CD4-positive, alpha-beta T cell (primary cell): ENCODE measurements at regions of chr19 and their contacts with region 1.

Region 1: DNA sequence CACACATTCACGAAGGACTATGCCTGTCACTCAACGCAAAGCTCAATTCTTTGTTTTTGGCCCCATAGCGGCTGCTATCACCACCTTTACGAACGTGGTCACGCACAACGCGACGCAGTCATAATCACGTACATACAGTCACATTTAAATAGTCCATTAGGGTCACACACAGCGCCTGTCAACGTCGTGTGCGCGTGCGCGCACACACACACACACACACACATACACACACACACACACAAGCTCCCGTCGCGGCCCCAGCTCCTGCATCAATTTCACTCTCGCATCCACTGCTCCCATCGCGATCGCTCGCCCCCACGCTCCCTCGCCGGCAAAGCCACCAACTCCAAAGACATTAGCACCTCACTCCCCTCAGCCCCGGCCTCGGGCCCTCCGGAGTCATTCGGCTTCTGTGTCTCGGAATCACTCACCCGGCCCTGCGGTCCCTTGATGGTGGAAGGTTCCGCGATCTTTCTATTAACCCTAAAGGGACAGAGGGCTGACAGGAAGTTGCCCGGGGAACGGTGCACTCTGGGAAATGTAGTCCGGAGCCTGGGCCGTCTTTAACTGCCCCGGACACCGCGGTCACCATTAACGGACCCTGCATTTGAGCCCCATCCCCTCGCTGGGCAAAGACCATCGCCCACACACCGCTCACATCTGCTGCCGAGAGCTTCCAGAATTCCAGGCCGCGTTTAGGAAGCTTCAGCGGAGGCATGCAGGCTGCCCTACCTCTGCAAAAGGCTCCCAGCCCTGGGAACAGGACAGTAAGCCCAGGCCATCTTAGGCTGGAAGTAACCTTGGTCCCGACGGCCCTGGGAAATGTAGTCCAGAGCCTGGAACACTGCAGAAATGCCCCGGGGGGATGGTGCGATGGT is at the start of gene ZNF790:
- DNase-seq: peak; percentile 69 to 91 (median 78)
- ATAC-seq: peak; percentile 88
- H3K4me3 ChIP-seq: peak within 1 kb of the TSS; percentile 66
- H3K4me3 Mint-ChIP-seq: no peak within 1 kb of the TSS
- H3K27ac ChIP-seq: peak within 1 kb of the TSS; percentile 81 to 90
- H3K27ac Mint-ChIP-seq: no peak within 1 kb of the TSS
- H3K4me1 ChIP-seq: peaks cover 18% of the 10 kb centered on the region
- H3K4me1 Mint-ChIP-seq: peaks cover 9% of the 10 kb centered on the region
- H3K27me3 ChIP-seq: no peaks in the 10 kb centered on the region
- H3K27me3 Mint-ChIP-seq: no peaks in the 10 kb centered on the region
- CTCF ChIP-seq: no peak
- total RNA-seq, gene ZNF790: 2.9 to 3.5 TPM

Region 2: GRCh38 chr19:36573020-36573885 is 264.9 kb before region 1 on chr19 and contains the start of gene ZNF529:
- CTCF ChIA-PET with region 1: no interaction called
- POLR2A ChIA-PET with region 1: interaction called, 6 read pairs
- intact Hi-C with region 1: loop called in 1 of 2 experiments (anchors 5 kb)
- DNase-seq: peak; percentile 69 to 94 (median 78)
- ATAC-seq: peak; percentile 92
- H3K4me3 ChIP-seq: peak within 1 kb of the TSS; percentile 88
- H3K4me3 Mint-ChIP-seq: peak within 1 kb of the TSS; percentile 94
- H3K27ac ChIP-seq: peak within 1 kb of the TSS; percentile 89 to 97
- H3K27ac Mint-ChIP-seq: peak within 1 kb of the TSS; percentile 93
- H3K4me1 ChIP-seq: peaks cover 25% of the 10 kb centered on the region
- H3K4me1 Mint-ChIP-seq: peaks cover 39% of the 10 kb centered on the region
- H3K27me3 ChIP-seq: no peaks in the 10 kb centered on the region
- H3K27me3 Mint-ChIP-seq: no peaks in the 10 kb centered on the region
- CTCF ChIP-seq: no peak
- total RNA-seq, gene ZNF529: 39.6 to 42.7 TPM

Region 3: DNA sequence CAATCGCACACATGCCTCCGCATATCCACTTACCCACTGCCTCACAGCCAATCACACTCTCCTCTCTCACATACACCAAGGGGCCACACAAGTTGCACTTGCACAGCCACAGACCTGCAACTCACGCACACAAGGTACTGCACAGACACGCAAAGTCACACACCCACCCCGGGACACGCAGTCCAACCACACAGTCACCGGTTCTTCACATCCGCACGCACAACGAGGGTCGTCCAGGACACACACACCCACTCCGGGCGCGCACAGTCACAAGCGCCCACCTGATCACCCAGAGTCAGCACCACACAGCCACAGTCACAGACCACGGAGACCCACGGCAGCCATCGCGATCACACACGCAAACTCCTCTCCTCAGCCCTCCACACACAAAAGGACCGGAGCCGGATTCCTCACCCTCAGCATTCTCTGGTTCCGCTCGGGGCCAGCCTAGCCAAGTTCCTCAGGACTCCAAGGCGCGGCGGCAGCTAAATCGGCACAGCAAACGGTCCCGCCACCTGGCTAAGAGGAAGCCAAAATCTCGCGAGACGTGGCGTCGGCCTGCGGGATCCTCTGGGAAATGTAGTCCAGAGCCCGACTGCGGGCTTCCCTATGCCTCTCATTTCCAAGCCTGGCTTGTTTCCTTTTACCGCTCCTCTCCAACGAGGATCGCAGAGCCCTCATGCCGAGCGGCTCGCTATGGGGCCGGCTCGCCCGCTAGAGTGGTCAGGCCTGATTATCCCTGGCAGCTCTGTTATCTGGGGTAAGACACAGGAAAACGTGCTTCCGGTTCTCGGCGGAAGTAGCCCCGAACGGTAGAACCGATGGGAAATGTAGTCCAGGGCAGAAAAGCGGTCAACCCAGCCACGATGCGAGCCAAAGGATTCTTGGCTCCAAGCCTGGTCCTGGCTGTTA is 65.6 kb before region 1 on chr19 and contains the start of gene ZNF850:
- CTCF ChIA-PET with region 1: no interaction called
- POLR2A ChIA-PET with region 1: interaction called, 19 read pairs
- intact Hi-C with region 1: loop called (anchors 5 to 10 kb)
- DNase-seq: peak; percentile 87 to 96 (median 93)
- ATAC-seq: peak; percentile 94
- H3K4me3 ChIP-seq: peak within 1 kb of the TSS; percentile 91
- H3K4me3 Mint-ChIP-seq: peak within 1 kb of the TSS; percentile 95
- H3K27ac ChIP-seq: peak within 1 kb of the TSS; percentile 78 to 94
- H3K27ac Mint-ChIP-seq: peak within 1 kb of the TSS; percentile 84
- H3K4me1 ChIP-seq: peaks cover 20% of the 10 kb centered on the region
- H3K4me1 Mint-ChIP-seq: peaks cover 20% of the 10 kb centered on the region
- H3K27me3 ChIP-seq: no peaks in the 10 kb centered on the region
- H3K27me3 Mint-ChIP-seq: no peaks in the 10 kb centered on the region
- CTCF ChIP-seq: no peak
- total RNA-seq, gene ZNF850: 0.77 to 2.1 TPM

Region 4: GRCh38 chr19:36915992-36916830 is 78.1 kb after region 1 on chr19 and contains the starts of genes ZNF568 and ZNF829:
- CTCF ChIA-PET with region 1: no interaction called
- POLR2A ChIA-PET with region 1: interaction called, 7 read pairs
- intact Hi-C with region 1: loop called (anchors 1 to 5 kb)
- DNase-seq: peak; percentile 83 to 97 (median 90)
- ATAC-seq: peak; percentile 97
- H3K4me3 ChIP-seq: peak within 1 kb of the TSS; percentile 92
- H3K4me3 Mint-ChIP-seq: peak within 1 kb of the TSS; percentile 90
- H3K27ac ChIP-seq: peak within 1 kb of the TSS; percentile 89 to 97
- H3K27ac Mint-ChIP-seq: peak within 1 kb of the TSS; percentile 88
- H3K4me1 ChIP-seq: peaks cover 19% of the 10 kb centered on the region
- H3K4me1 Mint-ChIP-seq: peaks cover 44% of the 10 kb centered on the region
- H3K27me3 ChIP-seq: no peaks in the 10 kb centered on the region
- H3K27me3 Mint-ChIP-seq: no peaks in the 10 kb centered on the region
- CTCF ChIP-seq: peak; percentile 74
- total RNA-seq, gene ZNF568: 3.0 to 4.2 TPM
- total RNA-seq, gene ZNF829: 3.8 to 4.4 TPM